Mammary epithelial cell (primary cell): ENCODE measurements at regions of chr4 and their contacts with region 1.

Region 1: DNA sequence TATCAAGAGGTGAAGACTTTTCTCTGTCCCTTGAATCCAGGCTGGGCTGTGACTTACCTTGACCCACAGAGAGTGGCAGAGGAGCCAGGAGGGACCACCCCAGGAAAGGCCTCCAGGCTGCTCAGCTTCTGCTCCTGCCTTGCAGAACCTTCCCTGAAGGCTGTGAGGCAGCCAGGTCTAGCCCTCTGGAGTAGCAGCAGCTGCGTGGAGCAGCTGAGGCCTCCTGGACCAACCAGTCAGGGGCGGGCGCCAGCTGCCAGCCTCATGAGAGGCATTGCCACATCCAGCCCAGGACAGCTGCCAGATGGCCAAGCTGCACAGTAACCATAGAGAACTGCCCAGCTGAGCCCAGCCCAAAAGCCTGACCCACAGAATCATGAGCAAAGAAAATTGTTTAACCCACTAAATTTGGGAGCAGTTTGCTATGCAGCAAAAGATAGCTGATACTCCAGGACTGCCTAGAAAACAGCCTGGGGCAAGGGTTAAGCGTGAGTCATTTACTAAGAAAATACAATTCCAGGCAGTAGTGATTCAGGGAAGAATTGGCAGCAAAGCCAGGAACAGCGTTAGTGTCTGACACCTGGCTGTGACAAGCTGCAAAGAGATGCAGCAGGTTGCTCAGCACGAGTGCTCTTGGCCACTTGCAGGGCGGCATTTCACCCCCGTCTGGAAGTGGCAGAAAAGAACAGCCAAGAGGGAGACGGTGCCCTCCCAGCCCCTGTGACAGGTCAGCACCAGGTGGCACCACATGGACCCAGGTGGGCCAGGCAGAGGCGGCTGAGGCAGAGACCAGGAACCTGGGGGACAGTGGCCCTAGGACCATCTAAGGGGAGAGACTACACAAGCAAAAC is 14.7 kb upstream of the PDE6B start:
- DNase-seq: peak; percentile 87
- H3K4me3 ChIP-seq: no peak overlapping the region
- H3K27ac ChIP-seq: no peak overlapping the region
- H3K4me1 ChIP-seq: peaks cover 6% of the 10 kb centered on the region
- H3K27me3 ChIP-seq: no peaks in the 10 kb centered on the region
- CTCF ChIP-seq: peak in 1 of 2 donors; percentile 30

Region 2: DNA sequence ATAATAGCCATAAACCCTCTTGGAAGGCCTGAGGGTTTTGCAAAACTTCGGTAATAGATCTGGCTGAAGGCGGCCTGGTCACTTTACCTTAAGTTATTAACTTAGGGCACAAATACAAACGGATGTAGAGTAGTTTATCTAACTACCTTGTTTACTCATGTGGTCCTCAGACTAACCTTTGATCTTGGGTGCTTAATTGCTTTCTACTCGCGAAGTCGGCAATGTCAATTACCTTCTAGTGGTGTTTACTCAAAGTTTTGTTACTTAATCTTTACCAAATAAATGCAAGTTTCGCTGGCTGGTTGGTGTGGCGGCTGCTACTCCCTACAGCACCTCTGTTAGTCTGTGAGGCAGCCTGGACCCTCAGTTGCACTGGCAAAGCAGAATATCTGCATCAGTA is 281.9 kb before region 1 on chr4:
- CTCF ChIA-PET with region 1: no interaction called
- dilution Hi-C with region 1: no loop called
- in situ Hi-C with region 1: no loop called
- intact Hi-C with region 1: no loop called
- DNase-seq: no peak
- H3K4me3 ChIP-seq: no peak overlapping the region
- H3K27ac ChIP-seq: no peak overlapping the region
- H3K4me1 ChIP-seq: no peaks in the 10 kb centered on the region
- H3K27me3 ChIP-seq: no peaks in the 10 kb centered on the region
- CTCF ChIP-seq: no peak

Region 3: GRCh38 chr4:683982-684622 is 73.5 kb after region 1 on chr4:
- CTCF ChIA-PET with region 1: no interaction called
- dilution Hi-C with region 1: no loop called
- in situ Hi-C with region 1: no loop called
- intact Hi-C with region 1: no loop called
- DNase-seq: no peak
- H3K4me3 ChIP-seq: no peak overlapping the region
- H3K27ac ChIP-seq: no peak overlapping the region
- H3K4me1 ChIP-seq: peaks cover 23% of the 10 kb centered on the region
- H3K27me3 ChIP-seq: no peaks in the 10 kb centered on the region
- CTCF ChIP-seq: peak; percentile 51 to 64

Region 4: DNA sequence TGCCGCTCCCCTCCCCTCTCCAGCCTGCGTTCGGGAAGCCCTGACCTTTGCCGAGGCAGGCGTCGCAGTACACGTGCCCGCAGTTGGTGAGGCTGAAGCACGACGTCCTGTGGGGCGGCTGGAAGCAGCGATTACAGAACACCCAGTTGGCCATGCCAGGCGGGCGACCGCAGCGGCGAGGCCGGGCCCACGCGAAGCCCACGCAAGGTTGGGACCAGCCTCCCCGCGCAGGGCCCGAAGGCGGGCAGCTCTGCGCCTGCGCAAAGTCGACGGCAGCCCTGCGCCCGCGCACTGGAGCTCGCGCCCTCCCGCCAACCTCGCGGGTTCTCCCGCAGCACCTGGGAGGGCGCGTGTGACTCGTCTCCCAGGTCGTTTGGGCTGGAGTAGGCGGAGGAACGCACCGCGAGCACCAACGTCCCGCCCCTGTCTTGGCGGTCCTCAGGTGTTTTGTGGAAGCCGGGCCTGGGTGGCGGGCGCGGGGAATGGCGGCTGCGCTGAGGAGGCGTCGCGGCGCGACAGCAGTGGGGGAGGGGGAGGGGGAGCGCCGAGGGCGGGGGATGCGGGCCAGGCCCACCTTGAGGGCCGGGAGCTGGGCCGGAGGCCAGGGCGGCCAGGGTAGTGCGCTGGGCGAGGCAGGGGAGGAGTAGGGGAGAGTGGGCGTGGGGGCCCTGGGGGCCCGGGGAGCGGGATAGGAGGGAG is 502.8 kb after region 1 on chr4 and contains the start of gene RNF212:
- CTCF ChIA-PET with region 1: no interaction called
- dilution Hi-C with region 1: loop called (anchors 10 kb)
- in situ Hi-C with region 1: no loop called
- intact Hi-C with region 1: no loop called
- DNase-seq: no peak
- H3K4me3 ChIP-seq: peak within 1 kb of the TSS in 2 of 3 experiments; percentile 40 to 42
- H3K27ac ChIP-seq: no peak within 1 kb of the TSS
- H3K4me1 ChIP-seq: peaks cover 4% of the 10 kb centered on the region
- H3K27me3 ChIP-seq: no peaks in the 10 kb centered on the region
- CTCF ChIP-seq: no peak
- total RNA-seq, gene RNF212: 0.33 to 2.2 TPM